Dendritic cell treated with granulocyte-macrophage colony-stimulating factor and Interleukin-4, amounts not matched to agents 40 ng/mL and 50 ng/mL, for 4 days (primary cell): ENCODE measurements at regions of chr2 and their contacts with region 1.

Region 1: DNA sequence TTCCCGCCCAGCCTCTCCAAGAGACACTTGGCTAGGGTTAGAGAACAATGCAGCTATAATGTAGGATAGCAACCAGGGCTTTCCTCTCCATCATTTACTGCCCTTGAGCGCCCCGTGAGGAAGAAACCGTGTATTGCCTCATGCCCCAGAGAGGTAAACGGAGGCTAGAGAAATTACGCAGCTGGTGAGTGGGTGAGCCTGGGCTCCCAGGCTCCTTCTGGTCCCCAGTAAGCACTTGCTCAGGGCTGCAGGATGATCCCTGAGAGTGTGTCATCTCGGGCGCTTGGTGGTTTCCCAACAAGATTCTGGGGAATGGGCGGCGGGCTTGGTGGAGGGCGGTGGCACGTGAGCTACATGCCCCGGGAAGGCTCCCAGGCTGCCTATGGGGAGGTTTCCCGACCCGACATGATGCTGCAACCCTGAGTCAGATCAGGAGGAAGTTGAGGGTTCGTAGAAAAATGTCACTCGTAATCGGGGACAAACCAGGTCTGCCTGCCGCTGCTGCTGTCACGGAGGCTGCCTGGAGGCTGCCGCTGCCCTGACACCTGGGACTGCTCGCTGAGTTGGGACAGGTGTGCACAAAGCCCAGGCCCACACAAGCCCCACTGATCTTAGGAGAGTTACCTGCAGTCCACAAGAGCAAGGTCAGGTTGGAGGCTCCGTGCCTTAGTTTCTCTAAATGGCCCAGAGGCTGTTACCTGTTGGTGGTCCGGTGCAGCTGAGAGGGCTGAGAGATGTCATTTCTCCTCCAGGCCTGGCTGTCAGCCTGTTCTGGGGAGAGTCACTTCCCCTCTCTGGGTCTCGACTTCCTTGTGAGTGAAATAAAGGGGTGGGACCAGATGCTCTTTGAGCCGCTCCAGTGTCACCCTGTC is at the start of gene GPR55:
- H3K4me3 Mint-ChIP-seq: peak within 1 kb of the TSS; percentile 69
- H3K27ac Mint-ChIP-seq: peak within 1 kb of the TSS; percentile 98
- H3K4me1 Mint-ChIP-seq: peaks cover 49% of the 10 kb centered on the region
- H3K27me3 Mint-ChIP-seq: peaks cover 2% of the 10 kb centered on the region

Region 2: DNA sequence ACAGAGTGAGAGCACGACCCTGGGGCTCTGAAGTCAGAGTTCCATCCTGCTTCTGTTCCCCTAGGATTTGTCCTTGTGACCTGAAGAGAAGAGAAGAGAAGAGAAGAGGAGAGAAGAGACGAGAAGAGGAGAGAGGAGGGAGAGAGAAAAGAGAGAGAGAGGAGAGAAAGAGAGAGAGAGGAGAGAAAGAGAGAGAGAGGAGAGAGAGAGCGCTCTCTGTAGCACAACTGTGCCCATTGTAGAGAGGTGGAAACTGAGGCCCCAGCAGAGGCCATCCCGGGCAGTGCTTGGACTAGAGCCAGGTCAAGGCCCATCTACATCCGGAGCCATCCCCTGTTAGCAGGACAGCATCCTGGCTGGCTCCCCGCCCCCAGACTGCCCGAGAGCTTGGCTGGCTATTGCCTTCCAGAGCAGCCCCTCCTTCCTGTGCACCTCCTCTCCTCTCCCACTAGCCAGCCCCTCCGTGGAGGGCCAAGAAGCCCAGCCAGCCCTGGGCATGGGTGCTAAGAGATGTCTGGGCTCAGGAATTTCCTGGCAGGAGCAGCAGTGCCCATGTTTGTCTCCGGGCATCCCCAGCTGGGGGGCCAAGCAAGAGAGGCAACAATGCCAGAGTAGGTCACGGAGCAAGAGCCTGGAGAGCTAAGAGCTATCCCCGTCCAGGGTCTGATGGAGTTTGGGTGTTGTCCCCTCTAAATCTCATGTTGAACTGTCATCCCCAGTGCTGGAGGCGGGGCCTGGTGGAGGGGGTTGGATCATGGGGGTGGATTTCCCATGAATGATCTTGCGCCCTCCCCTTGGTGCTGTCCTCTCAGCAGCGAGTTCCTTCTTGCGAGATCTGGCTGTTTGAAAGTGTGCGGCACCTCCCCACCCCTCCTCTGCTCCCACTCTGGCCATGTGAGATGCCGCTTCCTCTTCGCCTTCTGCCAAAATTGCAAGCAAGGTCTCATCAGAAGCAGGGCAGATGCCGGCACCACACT is 18.5 kb after region 1 on chr2:
- intact Hi-C with region 1: loop called (anchors 2 kb)
- H3K4me3 Mint-ChIP-seq: peak overlapping the region; percentile 73
- H3K27ac Mint-ChIP-seq: peak overlapping the region; percentile 86
- H3K4me1 Mint-ChIP-seq: peaks cover 72% of the 10 kb centered on the region
- H3K27me3 Mint-ChIP-seq: peaks cover 5% of the 10 kb centered on the region